CD8-positive, alpha-beta memory T cell (primary cell): ENCODE measurements at regions of chr11 and their contacts with region 1.

Region 1: GRCh38 chr11:11028017-11028692 is 170.3 kb upstream of the ZBED5 start:
- DNase-seq: peak; percentile 42 to 80 (median 60)
- H3K4me3 ChIP-seq: no peak overlapping the region
- H3K4me3 Mint-ChIP-seq: no peak overlapping the region
- H3K27ac ChIP-seq: no peak overlapping the region
- H3K27ac Mint-ChIP-seq: no peak overlapping the region
- H3K4me1 ChIP-seq: no peaks in the 10 kb centered on the region
- H3K4me1 Mint-ChIP-seq: no peaks in the 10 kb centered on the region
- H3K27me3 ChIP-seq: no peaks in the 10 kb centered on the region
- H3K27me3 Mint-ChIP-seq: peaks cover 5 to 6% of the 10 kb centered on the region in 2 donors

Region 2: DNA sequence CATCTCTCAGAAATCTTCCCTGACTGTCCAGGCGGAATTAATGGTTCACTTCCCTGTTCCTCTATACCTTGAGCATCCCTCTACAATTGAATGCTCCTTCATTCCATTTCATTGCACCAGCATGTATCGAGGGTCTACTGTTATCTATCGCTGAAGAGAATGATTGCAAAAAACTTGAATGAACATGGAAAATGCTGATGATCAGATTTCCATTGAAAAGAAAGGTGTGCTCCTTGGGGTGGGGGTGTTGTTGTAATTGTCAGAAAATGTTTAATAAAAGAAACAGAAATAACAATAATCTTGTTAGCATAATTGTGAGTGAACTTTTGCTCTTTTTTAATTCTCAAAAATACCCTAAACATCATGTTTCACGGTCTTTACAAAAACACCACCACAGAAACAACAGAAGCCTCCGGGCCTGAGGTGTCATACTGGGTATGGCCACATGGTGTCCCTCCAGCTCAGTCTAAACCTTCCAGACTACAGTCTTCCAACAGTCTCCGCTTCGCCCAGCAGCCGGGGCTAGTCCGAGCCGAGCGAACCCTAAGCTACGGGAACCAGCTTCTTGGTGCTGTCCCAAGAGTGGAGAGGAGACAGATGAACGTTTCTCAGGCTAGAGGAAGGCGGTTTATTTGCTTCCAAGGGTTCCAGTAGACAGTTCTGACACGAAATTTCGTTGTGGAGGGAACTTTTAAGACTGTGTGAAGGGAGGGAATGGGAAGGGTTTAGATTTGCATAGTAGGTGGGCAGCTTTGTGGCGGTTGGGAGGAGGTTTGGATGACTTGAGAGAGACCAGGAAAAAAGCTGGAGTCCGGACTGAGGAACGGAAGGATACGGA is 94.5 kb before region 1 on chr11:
- CTCF ChIA-PET with region 1: interaction called, 20 read pairs
- POLR2A ChIA-PET with region 1: no interaction called
- DNase-seq: peak; percentile 56 to 81 (median 65)
- H3K4me3 ChIP-seq: peak overlapping the region; percentile 59
- H3K4me3 Mint-ChIP-seq: peak overlapping the region; percentile 74 to 92 (median 85)
- H3K27ac ChIP-seq: no peak overlapping the region
- H3K27ac Mint-ChIP-seq: peak overlapping the region in 5 of 8 donors; percentile 1 to 52 (median 24)
- H3K4me1 ChIP-seq: peaks cover 5% of the 10 kb centered on the region
- H3K4me1 Mint-ChIP-seq: peaks cover 15 to 22% (median 21%) of the 10 kb centered on the region in 3 donors
- H3K27me3 ChIP-seq: peaks cover 25% of the 10 kb centered on the region
- H3K27me3 Mint-ChIP-seq: peaks cover 18 to 39% of the 10 kb centered on the region in 2 donors

Region 3: DNA sequence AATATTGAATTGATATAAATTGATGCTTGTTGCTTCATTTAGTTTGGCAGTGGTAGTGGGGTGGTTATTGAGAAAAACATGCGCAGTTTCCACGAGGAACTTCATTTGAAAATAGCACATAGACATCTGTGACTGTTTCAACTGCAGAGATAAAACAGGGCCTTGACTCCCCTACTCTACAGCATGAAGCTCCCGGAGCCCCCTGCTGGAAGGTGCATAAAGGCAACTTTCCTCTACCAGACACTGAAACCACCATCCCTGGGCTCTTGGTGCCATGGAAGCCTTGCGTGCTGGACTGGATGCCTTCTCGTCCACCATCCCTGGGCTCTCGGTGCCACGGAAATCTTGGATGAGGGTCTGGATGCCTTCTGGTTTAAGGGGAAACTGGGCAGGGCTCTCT is 129.0 kb after region 1 on chr11:
- CTCF ChIA-PET with region 1: interaction called, 114 read pairs
- POLR2A ChIA-PET with region 1: no interaction called
- DNase-seq: peak; percentile 21 to 73 (median 28)
- H3K4me3 ChIP-seq: no peak overlapping the region
- H3K4me3 Mint-ChIP-seq: peak overlapping the region in 1 of 7 donors; percentile 12
- H3K27ac ChIP-seq: no peak overlapping the region
- H3K27ac Mint-ChIP-seq: peak overlapping the region in 2 of 8 donors; percentile 24 to 81
- H3K4me1 ChIP-seq: peaks cover 18% of the 10 kb centered on the region
- H3K4me1 Mint-ChIP-seq: peaks cover 10 to 15% (median 11%) of the 10 kb centered on the region in 3 donors
- H3K27me3 ChIP-seq: no peaks in the 10 kb centered on the region
- H3K27me3 Mint-ChIP-seq: peaks cover 3 to 12% of the 10 kb centered on the region in 2 donors

Region 4: GRCh38 chr11:11787305-11788062 is 759.3 kb after region 1 on chr11:
- CTCF ChIA-PET with region 1: interaction called, 57 read pairs
- POLR2A ChIA-PET with region 1: no interaction called
- DNase-seq: peak; percentile 49 to 72 (median 54)
- H3K4me3 ChIP-seq: no peak overlapping the region
- H3K4me3 Mint-ChIP-seq: no peak overlapping the region
- H3K27ac ChIP-seq: no peak overlapping the region
- H3K27ac Mint-ChIP-seq: no peak overlapping the region
- H3K4me1 ChIP-seq: no peaks in the 10 kb centered on the region
- H3K4me1 Mint-ChIP-seq: no peaks in the 10 kb centered on the region
- H3K27me3 ChIP-seq: no peaks in the 10 kb centered on the region
- H3K27me3 Mint-ChIP-seq: peaks cover 3 to 25% of the 10 kb centered on the region in 2 donors

Region 5: GRCh38 chr11:11793073-11793472 is 764.9 kb after region 1 on chr11:
- CTCF ChIA-PET with region 1: interaction called, 57 read pairs
- POLR2A ChIA-PET with region 1: no interaction called
- DNase-seq: no peak
- H3K4me3 ChIP-seq: no peak overlapping the region
- H3K4me3 Mint-ChIP-seq: no peak overlapping the region
- H3K27ac ChIP-seq: no peak overlapping the region
- H3K27ac Mint-ChIP-seq: no peak overlapping the region
- H3K4me1 ChIP-seq: no peaks in the 10 kb centered on the region
- H3K4me1 Mint-ChIP-seq: no peaks in the 10 kb centered on the region
- H3K27me3 ChIP-seq: no peaks in the 10 kb centered on the region
- H3K27me3 Mint-ChIP-seq: peaks cover 12 to 36% of the 10 kb centered on the region in 2 donors